ENCODE measurements at regions of chr3 and their contacts with region 1.

Region 1: GRCh38 chr3:136728918-136729317 is 23.3 kb downstream of the STAG1 start:
- DNase-seq: no peak
- CTCF ChIP-seq: no peak

Region 2: DNA sequence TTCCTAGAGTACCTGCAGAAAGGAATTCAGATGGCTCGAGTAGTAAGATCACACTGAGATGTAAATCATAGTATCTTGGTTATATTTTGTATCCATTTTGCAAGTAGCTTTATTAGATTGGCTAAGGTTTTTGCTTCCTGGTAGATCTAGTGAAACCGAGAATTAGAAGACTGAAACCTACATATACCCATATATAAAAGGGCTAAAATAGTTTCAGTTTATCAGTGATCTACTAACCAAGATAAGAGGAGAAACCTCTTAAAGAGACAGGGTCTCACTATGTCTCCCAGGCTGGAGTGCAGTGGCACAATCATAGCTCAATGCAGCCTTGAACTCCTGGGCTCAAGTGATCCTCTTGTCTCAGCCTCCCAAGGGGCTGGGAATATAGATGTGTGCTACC is 343.5 kb before region 1 on chr3:
- in situ Hi-C with region 1: loop called (anchors 25 kb)
- DNase-seq: peak; percentile 36
- CTCF ChIP-seq: no peak

Region 3: GRCh38 chr3:136532766-136533165 is 196.2 kb before region 1 on chr3:
- in situ Hi-C with region 1: no loop called
- DNase-seq: no peak
- CTCF ChIP-seq: no peak